Caco-2 (cell line): ENCODE measurements at regions of chrX and their contacts with region 1.

Region 1: DNA sequence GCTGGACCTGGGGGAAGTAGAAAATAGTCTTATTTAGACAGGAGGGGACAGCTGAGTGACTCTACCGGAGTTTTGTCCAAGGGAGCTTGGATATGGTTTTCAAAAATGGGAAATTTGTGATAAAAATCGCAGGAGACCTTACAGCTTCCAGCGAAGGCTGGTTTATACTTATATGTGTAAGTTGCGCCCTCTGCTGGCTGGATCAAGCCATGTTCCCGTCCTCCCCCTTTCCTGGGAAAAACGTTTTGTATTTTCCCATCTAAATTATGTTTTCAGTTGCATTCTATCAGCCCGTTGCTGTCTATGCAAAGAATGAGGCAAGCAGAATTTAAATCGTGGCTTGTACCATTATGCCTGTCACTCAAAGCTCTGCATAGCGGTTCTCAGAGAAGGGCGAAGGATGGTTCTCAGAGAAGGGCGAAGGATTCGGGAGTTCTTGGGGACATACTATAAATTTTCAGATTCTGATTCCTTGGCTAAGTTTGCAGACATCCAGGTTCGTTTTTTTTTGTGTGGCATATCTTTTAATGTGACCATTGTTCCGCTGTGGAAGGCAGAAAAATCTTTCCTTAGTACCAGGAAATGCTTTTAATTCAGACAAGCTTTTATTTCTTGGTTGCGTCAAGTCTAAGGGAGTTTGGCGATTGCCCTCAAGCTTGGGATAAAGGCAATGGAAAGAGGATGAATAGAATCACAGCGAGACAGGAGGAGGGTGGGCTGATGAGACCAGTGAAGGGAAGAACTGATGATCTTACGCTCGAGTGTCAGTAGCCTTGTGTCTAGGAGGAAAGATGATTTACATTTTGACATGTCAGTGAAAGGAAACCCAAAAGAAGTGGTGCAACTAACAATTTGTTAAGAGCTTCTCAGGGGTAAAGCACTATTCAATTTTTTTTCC is 128.5 kb upstream of the ARX start:
- DNase-seq: peak; percentile 37 to 41
- H3K4me3 ChIP-seq: no peak overlapping the region
- H3K4me3 Mint-ChIP-seq: no peak overlapping the region
- H3K27ac Mint-ChIP-seq: no peak overlapping the region
- H3K4me1 ChIP-seq: no peaks in the 10 kb centered on the region
- H3K4me1 Mint-ChIP-seq: no peaks in the 10 kb centered on the region
- H3K27me3 ChIP-seq: no peaks in the 10 kb centered on the region; the same call in 1 of the 2 replicates
- H3K27me3 Mint-ChIP-seq: no peaks in the 10 kb centered on the region
- CTCF ChIP-seq: peak; percentile 32 to 70

Region 2: GRCh38 chrX:24515447-24515846 is 628.8 kb before region 1 on chrX:
- CTCF ChIA-PET with region 1: no interaction called
- POLR2A ChIA-PET with region 1: no interaction called
- intact Hi-C with region 1: loop called (anchors 5 kb)
- DNase-seq: peak in 1 of 2 experiments; percentile 7
- H3K4me3 ChIP-seq: no peak overlapping the region
- H3K4me3 Mint-ChIP-seq: no peak overlapping the region
- H3K27ac Mint-ChIP-seq: no peak overlapping the region
- H3K4me1 ChIP-seq: no peaks in the 10 kb centered on the region
- H3K4me1 Mint-ChIP-seq: no peaks in the 10 kb centered on the region
- H3K27me3 ChIP-seq: no peaks in the 10 kb centered on the region
- H3K27me3 Mint-ChIP-seq: no peaks in the 10 kb centered on the region
- CTCF ChIP-seq: peak in 1 of 2 experiments; percentile 42

Region 3: GRCh38 chrX:24748202-24748843 is 396.0 kb before region 1 on chrX:
- CTCF ChIA-PET with region 1: no interaction called
- POLR2A ChIA-PET with region 1: no interaction called
- intact Hi-C with region 1: loop called (anchors 1 kb)
- DNase-seq: no peak
- H3K4me3 ChIP-seq: no peak overlapping the region
- H3K4me3 Mint-ChIP-seq: no peak overlapping the region
- H3K27ac Mint-ChIP-seq: no peak overlapping the region
- H3K4me1 ChIP-seq: no peaks in the 10 kb centered on the region
- H3K4me1 Mint-ChIP-seq: no peaks in the 10 kb centered on the region
- H3K27me3 ChIP-seq: no peaks in the 10 kb centered on the region
- H3K27me3 Mint-ChIP-seq: no peaks in the 10 kb centered on the region
- CTCF ChIP-seq: no peak

Region 4: GRCh38 chrX:24838629-24839028 is 305.7 kb before region 1 on chrX:
- CTCF ChIA-PET with region 1: no interaction called
- POLR2A ChIA-PET with region 1: no interaction called
- intact Hi-C with region 1: loop called (anchors 1 kb)
- DNase-seq: peak in 1 of 2 experiments; percentile 21
- H3K4me3 ChIP-seq: no peak overlapping the region
- H3K4me3 Mint-ChIP-seq: no peak overlapping the region
- H3K27ac Mint-ChIP-seq: no peak overlapping the region
- H3K4me1 ChIP-seq: no peaks in the 10 kb centered on the region
- H3K4me1 Mint-ChIP-seq: no peaks in the 10 kb centered on the region
- H3K27me3 ChIP-seq: no peaks in the 10 kb centered on the region
- H3K27me3 Mint-ChIP-seq: no peaks in the 10 kb centered on the region
- CTCF ChIP-seq: peak; percentile 21 to 42

Region 5: DNA sequence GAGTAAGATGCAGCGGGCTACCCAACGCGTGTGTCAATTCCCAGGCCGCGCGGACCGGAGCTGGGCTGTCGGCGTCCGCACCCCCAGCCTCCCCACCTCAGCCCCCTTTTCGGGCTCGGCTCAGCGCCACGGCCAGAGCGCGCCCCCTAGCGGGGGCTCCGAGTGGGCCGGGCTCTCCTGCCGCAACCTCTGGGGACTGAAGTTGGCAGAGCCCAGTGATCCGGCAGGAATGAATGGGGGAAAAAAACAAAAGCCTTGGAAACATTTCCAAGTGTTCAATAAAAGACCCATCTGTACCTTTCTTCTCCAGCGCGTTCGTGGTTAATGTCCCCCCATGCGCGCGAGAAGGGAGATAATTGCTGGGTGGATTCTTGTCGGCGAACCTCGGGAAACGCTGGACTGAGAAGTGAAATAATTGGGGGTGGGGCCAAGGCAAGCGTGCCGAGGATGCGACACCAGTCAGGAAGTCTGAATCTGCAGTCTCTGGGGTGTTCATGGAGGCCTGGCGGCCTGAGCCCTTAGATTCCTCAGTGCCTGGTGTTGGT is 123.3 kb before region 1 on chrX:
- CTCF ChIA-PET with region 1: no interaction called
- POLR2A ChIA-PET with region 1: no interaction called
- intact Hi-C with region 1: loop called (anchors 5 kb)
- DNase-seq: peak in 1 of 2 experiments; percentile 66
- H3K4me3 ChIP-seq: peak overlapping the region; percentile 35
- H3K4me3 Mint-ChIP-seq: peak overlapping the region; percentile 69
- H3K27ac Mint-ChIP-seq: no peak overlapping the region
- H3K4me1 ChIP-seq: no peaks in the 10 kb centered on the region
- H3K4me1 Mint-ChIP-seq: no peaks in the 10 kb centered on the region
- H3K27me3 ChIP-seq: no peaks in the 10 kb centered on the region; the same call in 1 of the 2 replicates
- H3K27me3 Mint-ChIP-seq: peaks cover 34% of the 10 kb centered on the region
- CTCF ChIP-seq: peak; percentile 60 to 79

Region 6: DNA sequence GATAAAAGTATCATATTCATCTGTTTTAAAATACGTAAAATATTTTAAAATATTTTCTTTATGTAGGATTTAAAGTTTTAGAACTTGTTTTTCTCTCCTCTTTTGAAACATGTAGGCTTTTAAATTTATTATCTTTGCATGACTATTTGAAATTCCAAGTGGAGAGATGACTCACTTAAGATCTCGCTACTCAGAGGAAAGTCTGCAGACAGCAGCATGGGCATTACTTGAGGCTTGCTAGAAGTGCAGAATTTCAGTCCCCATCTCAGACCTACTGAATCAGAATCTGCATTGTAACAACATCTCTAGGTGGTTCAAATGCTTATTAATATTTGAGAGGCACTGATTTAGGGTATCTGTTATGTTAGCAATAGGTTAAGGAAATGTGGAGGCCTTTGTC is 97.2 kb after region 1 on chrX:
- CTCF ChIA-PET with region 1: no interaction called
- POLR2A ChIA-PET with region 1: no interaction called
- intact Hi-C with region 1: no loop called
- DNase-seq: no peak
- H3K4me3 ChIP-seq: no peak overlapping the region
- H3K4me3 Mint-ChIP-seq: no peak overlapping the region
- H3K27ac Mint-ChIP-seq: no peak overlapping the region
- H3K4me1 ChIP-seq: no peaks in the 10 kb centered on the region
- H3K4me1 Mint-ChIP-seq: no peaks in the 10 kb centered on the region
- H3K27me3 ChIP-seq: no peaks in the 10 kb centered on the region
- H3K27me3 Mint-ChIP-seq: peaks cover 4% of the 10 kb centered on the region
- CTCF ChIP-seq: no peak